GM10248 (cell line): ENCODE measurements at regions of chr4 and their contacts with region 1.

Region 1: DNA sequence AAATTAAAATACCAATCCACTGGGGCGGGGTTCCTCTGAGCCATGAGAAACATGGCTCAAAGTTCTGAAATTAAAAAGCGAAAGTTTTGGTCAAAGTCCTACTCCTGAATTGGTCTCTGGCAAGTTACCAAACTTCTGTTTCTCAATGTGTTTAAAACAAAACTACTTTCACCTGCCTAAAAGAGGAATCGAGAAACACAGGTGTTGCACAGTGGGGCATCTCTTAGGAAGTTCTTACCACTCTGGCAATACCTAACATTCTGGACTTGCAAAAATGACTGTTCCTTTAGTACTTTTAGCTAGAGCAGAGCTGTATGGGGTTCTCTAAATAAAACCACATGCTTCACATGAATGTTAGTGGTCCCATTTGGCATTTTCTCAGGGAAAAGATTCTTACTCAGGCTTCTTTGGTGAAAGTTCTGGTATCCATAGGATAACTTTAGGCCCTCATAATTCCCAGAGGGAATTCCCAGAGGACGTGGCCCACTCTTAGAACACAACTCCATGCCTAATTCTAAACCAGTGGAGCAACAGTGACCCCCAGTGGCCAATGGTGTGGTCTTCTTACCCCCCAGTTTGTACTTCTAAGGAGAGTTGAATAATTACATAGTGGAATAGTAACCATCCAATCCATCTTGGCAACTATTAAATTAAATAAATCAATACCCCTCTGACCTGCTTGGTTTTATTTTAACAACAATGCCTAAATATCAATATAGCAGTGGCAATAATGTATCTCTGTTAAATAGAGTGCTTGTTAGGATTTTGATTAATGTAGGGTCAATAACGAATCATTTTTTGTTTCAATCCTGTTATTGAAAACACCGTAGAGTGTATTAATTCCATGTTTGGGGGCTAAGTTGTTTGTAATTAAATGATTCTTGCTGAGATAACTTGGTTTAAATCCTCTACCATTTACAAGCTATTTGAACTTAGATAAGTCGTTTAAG is 21.9 kb downstream of the BMP3 start:
- DNase-seq: peak; percentile 26
- CTCF ChIP-seq: peak; percentile 75

Region 2: GRCh38 chr4:80876810-80877209 is 175.6 kb before region 1 on chr4:
- CTCF ChIA-PET with region 1: no interaction called
- POLR2A ChIA-PET with region 1: no interaction called
- DNase-seq: peak; percentile 25
- CTCF ChIP-seq: no peak

Region 3: DNA sequence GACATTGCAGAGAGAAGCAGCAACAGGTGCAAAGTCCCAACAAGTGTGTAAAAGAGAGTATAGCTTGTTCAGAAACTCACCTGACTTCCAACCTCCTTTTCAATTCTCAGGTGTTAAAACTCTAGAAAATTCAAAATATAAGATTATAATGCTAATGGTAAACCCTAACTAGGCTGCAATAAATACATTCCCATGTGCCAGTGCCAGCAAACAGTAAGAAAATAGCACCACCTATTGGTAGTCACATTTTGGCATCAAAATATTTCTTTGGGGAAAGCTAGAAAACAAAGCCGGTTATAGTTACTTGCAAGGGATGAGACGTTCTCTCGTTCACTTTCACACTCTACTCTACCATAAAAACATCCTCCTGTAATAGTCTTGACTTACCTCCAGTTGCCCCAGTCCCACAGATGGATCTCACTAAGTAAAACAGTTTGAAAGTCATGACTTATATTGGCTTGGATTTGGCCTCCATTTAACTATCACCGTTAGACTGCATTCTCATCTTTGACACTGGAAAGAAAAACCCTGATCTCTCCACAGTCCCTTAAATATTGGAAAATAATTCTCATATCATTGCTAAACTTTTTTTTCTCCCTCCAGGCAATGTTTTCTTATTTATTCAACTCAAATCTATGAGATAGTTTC is 12.3 kb before region 1 on chr4:
- CTCF ChIA-PET with region 1: interaction called, 36 read pairs
- POLR2A ChIA-PET with region 1: no interaction called
- DNase-seq: no peak
- CTCF ChIP-seq: peak; percentile 63